ENCODE measurements at regions of chr14 and their contacts with region 1.

Region 1: GRCh38 chr14:54488646-54489317 is at the start of gene GMFB:
- DNase-seq: peak; percentile 86 to 93
- ATAC-seq: peak; percentile 95 to 98 (median 97)
- H3K4me3 ChIP-seq: peak within 1 kb of the TSS; percentile 88
- H3K4me3 Mint-ChIP-seq: peak within 1 kb of the TSS; percentile 94
- H3K27ac ChIP-seq: peak within 1 kb of the TSS; percentile 88
- H3K27ac Mint-ChIP-seq: peak within 1 kb of the TSS; percentile 82 to 86
- H3K4me1 ChIP-seq: peaks cover 24% of the 10 kb centered on the region
- H3K4me1 Mint-ChIP-seq: peaks cover 50 to 57% of the 10 kb centered on the region in 2 donors
- H3K27me3 ChIP-seq: no peaks in the 10 kb centered on the region
- H3K27me3 Mint-ChIP-seq: no peaks in the 10 kb centered on the region
- CTCF ChIP-seq: no peak
- total RNA-seq, gene GMFB: 46.4 to 55.1 (median 52.8) TPM

Region 2: GRCh38 chr14:54396493-54397335 is 92.1 kb before region 1 on chr14 and contains the start of gene CDKN3:
- intact Hi-C with region 1: loop called (anchors 2 kb)
- DNase-seq: peak; percentile 97
- ATAC-seq: peak; percentile 93 to 98 (median 94)
- H3K4me3 ChIP-seq: peak within 1 kb of the TSS; percentile 81
- H3K4me3 Mint-ChIP-seq: peak within 1 kb of the TSS; percentile 92
- H3K27ac ChIP-seq: no peak within 1 kb of the TSS
- H3K27ac Mint-ChIP-seq: peak within 1 kb of the TSS; percentile 58 to 86
- H3K4me1 ChIP-seq: peaks cover 12% of the 10 kb centered on the region
- H3K4me1 Mint-ChIP-seq: peaks cover 7% of the 10 kb centered on the region in 2 donors
- H3K27me3 ChIP-seq: no peaks in the 10 kb centered on the region
- H3K27me3 Mint-ChIP-seq: peaks cover 0 to 3% of the 10 kb centered on the region in 2 donors
- CTCF ChIP-seq: peak; percentile 30
- total RNA-seq, gene CDKN3: 0.89 to 3.0 (median 1.8) TPM

Region 3: DNA sequence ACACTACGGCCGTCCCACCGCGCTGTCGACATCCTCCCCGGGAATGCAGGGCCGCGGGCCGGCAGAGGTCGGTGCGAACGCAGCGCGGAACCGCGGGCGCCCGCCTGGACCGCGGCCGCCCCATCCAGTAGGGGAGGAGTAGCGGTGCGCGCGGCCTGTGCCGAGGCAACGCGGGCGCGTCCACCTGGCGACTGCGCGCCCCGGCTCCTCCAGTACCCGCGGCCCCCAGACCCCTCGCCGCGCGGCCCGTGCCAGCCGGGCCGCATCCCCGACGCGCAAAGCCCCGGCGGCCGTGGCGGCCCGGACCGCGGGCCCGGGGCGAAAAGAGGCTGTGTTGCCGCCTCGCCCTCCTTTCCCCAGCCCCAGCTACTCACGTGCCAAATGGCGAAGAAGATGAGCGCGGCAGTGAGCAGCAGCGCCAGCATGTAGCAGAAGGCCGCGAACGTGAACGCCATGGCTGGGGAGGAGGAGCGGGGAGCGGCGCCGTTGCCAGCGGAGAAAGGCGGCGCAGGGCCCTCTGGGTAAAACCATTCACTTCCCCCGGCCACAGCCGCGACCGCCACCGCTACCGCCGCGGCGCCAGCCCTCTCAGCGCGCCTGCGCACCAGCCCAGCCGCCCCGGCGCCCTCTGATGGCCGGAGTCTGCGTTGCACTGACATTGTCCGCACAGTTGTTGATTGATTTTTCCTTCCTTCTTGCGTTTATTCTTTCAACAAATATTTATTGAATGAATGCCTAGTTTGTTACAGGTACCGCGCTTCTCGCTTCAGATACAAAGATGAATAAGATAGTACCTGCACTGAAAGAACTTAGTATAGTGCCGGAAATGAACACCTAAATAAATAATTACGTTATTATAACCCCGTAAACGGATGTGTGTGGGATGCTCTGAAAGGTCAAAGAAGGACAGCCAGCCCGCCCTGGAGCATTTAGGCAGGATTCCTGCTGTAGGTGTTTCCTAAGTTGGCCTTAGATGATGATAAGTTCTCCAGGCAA is 47.6 kb before region 1 on chr14 and contains the start of gene CNIH1:
- intact Hi-C with region 1: loop called (anchors 2 kb)
- DNase-seq: peak; percentile 95 to 97
- ATAC-seq: peak; percentile 91 to 96 (median 95)
- H3K4me3 ChIP-seq: peak within 1 kb of the TSS; percentile 63
- H3K4me3 Mint-ChIP-seq: peak within 1 kb of the TSS; percentile 96
- H3K27ac ChIP-seq: peak within 1 kb of the TSS; percentile 80
- H3K27ac Mint-ChIP-seq: peak within 1 kb of the TSS; percentile 92
- H3K4me1 ChIP-seq: peaks cover 7% of the 10 kb centered on the region
- H3K4me1 Mint-ChIP-seq: peaks cover 26 to 33% of the 10 kb centered on the region in 2 donors
- H3K27me3 ChIP-seq: no peaks in the 10 kb centered on the region
- H3K27me3 Mint-ChIP-seq: peaks cover 5 to 17% of the 10 kb centered on the region in 2 donors
- CTCF ChIP-seq: peak; percentile 91
- total RNA-seq, gene CNIH1: 20.4 to 30.9 (median 25.7) TPM

Measured in natural killer cell (primary cell).